ENCODE measurements at regions of chr16 and their contacts with region 1.

Region 1: DNA sequence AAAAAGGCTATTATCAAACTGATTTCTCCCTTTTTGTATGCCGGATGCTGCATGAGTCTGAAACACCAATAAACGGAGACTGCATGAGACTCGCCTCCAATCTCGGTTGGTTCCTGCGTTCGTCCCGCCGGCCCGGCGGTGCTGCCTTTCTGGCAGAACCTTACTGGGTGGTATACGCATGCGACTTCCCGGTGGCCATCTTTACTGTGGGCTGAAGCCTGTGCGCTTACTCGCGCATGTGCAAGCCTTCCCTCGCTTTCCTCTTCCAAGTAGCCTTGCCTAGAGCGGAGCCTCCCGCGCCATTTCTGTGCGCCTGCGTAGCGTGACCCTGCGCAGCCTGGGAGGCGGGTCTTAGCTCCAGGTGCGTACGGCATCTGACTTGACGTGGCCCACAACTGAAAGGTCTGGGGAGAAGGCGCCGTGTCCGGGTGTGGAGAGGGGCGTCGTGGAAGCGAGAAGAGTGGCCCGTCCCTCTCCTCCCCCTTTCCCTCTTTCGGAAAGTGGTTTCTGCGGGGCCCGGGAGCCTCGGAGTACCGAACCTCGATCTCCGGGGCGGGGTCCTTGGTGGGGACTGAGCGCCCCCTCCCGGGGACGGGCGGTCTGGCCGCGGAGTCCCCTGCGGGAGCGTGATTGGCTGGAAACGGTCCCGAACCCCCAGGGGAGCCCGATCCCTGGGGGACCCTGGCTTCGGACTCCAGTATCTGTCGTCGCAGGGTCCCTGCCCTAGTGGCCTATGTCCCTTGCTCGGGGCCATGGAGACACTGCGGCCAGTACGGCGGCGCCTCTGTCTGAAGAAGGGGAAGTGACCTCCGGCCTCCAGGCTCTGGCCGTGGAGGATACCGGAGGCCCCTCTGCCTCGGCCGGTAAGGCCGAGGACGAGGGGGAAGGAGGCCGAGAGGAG is at the start of gene PAGR1:
- DNase-seq: peak; percentile 96 to 100
- ATAC-seq: peak; percentile 76 to 91 (median 78)
- H3K4me3 ChIP-seq: peak within 1 kb of the TSS; percentile 79
- H3K4me3 Mint-ChIP-seq: peak within 1 kb of the TSS; percentile 99
- H3K27ac ChIP-seq: peak within 1 kb of the TSS; percentile 88
- H3K27ac Mint-ChIP-seq: peak within 1 kb of the TSS; percentile 94 to 98
- H3K4me1 ChIP-seq: peaks cover 63% of the 10 kb centered on the region
- H3K4me1 Mint-ChIP-seq: peaks cover 59 to 81% of the 10 kb centered on the region in 2 donors
- H3K27me3 ChIP-seq: no peaks in the 10 kb centered on the region
- H3K27me3 Mint-ChIP-seq: peaks cover 0 to 2% of the 10 kb centered on the region in 2 donors
- CTCF ChIP-seq: peak; percentile 97
- total RNA-seq, gene PAGR1: 8.9 to 16.2 (median 13.4) TPM

Region 2: GRCh38 chr16:29664091-29664921 is 151.7 kb before region 1 on chr16:
- intact Hi-C with region 1: no loop called
- DNase-seq: peak; percentile 47 to 70
- ATAC-seq: peak; percentile 21 to 48 (median 38)
- H3K4me3 ChIP-seq: peak overlapping the region; percentile 90
- H3K4me3 Mint-ChIP-seq: peak overlapping the region; percentile 99
- H3K27ac ChIP-seq: peak overlapping the region; percentile 81
- H3K27ac Mint-ChIP-seq: peak overlapping the region; percentile 92 to 99
- H3K4me1 ChIP-seq: peaks cover 82% of the 10 kb centered on the region
- H3K4me1 Mint-ChIP-seq: peaks cover 55 to 82% of the 10 kb centered on the region in 2 donors
- H3K27me3 ChIP-seq: no peaks in the 10 kb centered on the region
- H3K27me3 Mint-ChIP-seq: no peaks in the 10 kb centered on the region
- CTCF ChIP-seq: no peak

Region 3: GRCh38 chr16:29790183-29790952 is 25.7 kb before region 1 on chr16 and contains the start of gene KIF22:
- intact Hi-C with region 1: loop called (anchors 1 kb)
- DNase-seq: peak; percentile 99 to 100
- ATAC-seq: peak; percentile 92 to 97 (median 93)
- H3K4me3 ChIP-seq: peak within 1 kb of the TSS; percentile 99
- H3K4me3 Mint-ChIP-seq: peak within 1 kb of the TSS; percentile 96
- H3K27ac ChIP-seq: peak within 1 kb of the TSS; percentile 82
- H3K27ac Mint-ChIP-seq: peak within 1 kb of the TSS; percentile 92
- H3K4me1 ChIP-seq: peaks cover 34% of the 10 kb centered on the region
- H3K4me1 Mint-ChIP-seq: peaks cover 43% of the 10 kb centered on the region in 2 donors
- H3K27me3 ChIP-seq: no peaks in the 10 kb centered on the region
- H3K27me3 Mint-ChIP-seq: no peaks in the 10 kb centered on the region
- CTCF ChIP-seq: peak; percentile 79
- total RNA-seq, gene KIF22: 73.4 to 96.0 (median 86.5) TPM

Region 4: GRCh38 chr16:30091474-30092372 is 275.7 kb after region 1 on chr16 and contains the start of gene TBX6:
- intact Hi-C with region 1: no loop called
- DNase-seq: peak; percentile 93 to 96
- ATAC-seq: peak; percentile 85 to 93 (median 86)
- H3K4me3 ChIP-seq: peak within 1 kb of the TSS; percentile 65
- H3K4me3 Mint-ChIP-seq: peak within 1 kb of the TSS; percentile 88
- H3K27ac ChIP-seq: peak within 1 kb of the TSS; percentile 69
- H3K27ac Mint-ChIP-seq: peak within 1 kb of the TSS; percentile 91 to 93
- H3K4me1 ChIP-seq: peaks cover 53% of the 10 kb centered on the region
- H3K4me1 Mint-ChIP-seq: peaks cover 28 to 44% of the 10 kb centered on the region in 2 donors
- H3K27me3 ChIP-seq: no peaks in the 10 kb centered on the region
- H3K27me3 Mint-ChIP-seq: no peaks in the 10 kb centered on the region
- CTCF ChIP-seq: peak; percentile 78
- total RNA-seq, gene TBX6: 0.91 to 1.1 (median 0.98) TPM

Measured in natural killer cell (primary cell).